Right ventricle myocardium inferior (tissue), 1 donor: ENCODE measurements at regions of chr4 and their contacts with region 1.

Region 1: DNA sequence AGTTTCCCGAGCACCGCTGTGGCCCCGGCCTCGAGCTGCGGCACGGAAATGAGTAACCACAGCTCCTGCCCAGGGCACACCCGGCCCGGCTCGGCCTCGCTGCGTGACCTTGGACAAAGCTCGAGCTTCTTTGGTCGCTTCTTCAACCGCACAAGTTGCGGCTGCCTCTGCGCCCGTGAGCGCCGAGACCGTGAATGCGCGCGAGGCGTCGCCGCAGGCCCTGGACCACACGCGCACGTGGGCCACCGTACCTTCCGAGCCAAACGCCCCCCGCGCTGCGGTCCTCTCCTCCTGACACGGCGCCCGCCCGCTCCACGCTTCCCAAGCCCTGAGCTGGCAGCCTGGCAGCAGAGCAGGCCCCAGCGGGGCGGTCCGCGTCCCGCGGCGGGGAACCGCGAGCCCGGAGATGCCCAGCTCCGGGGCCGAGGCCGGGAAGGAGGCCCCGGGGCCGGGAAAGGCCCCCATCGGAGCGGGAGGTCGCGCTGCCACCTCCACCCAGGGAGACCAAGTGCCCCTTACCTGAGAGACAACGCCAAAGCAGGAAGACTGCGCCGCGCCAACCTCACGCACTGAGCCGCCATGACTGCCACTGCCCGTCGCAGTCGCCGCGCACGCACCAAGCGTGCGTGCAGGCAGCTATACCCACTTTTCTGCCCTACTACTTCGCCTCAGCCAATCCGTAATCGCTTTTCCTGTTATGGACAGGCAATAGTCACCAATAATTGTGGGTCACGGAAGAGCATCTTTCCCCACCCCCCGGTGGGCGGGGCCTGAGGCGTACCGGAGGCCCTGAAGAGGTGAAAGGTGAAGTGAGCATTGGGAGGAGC is at the start of gene GRPEL1:
- DNase-seq: peak; percentile 100
- ATAC-seq: peak; percentile 99
- total RNA-seq, gene GRPEL1: 61.5 TPM

Region 2: DNA sequence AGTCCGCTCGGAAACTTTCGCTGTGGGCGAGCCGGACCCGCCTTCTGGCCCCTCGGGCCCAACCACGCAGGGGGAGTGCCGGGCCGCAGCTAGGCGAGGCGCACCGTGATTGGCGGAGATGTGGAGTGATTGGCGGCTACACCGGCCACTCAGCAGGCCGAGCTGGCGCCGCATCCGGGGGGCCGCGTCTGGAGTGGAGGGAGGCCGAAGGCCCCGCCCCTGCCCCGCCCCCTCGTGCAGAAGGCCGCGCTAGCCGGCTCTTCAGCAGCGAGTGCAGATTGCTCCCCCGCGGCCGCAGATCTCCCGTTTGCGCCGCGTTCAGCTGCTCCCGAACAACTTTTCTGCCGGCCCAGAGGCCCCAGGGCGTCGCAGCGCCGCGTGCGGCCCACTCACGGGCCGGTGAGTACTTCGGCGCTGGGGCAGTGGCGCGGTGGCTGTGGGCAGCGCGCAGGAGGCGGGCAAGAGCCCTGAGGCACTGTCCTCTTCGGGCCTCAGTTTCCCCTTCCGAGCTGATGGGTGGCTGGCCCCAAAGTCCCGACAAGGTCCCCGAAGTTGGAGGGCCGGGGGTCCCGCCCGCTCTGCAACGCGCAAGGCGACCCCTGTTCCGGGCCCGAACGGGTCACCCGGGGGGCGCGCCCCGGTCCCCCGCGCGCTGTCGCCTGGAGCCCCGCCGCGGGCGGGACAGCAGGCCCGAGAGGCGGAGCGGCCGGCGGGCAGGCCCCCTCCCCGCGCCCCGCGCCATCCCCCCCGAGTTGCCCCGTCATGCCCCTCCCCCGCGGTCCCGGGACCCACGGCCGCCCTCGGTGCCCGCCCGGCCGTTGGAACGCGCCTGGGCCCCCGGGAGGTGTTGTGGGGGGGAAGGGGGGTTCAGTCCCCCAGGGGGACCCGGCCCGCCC is 797.8 kb before region 1 on chr4 and contains the start of gene WFS1:
- intact Hi-C with region 1: loop called (anchors 10 kb)
- DNase-seq: peak; percentile 98
- ATAC-seq: peak; percentile 99
- total RNA-seq, gene WFS1: 88.4 TPM

Region 3: DNA sequence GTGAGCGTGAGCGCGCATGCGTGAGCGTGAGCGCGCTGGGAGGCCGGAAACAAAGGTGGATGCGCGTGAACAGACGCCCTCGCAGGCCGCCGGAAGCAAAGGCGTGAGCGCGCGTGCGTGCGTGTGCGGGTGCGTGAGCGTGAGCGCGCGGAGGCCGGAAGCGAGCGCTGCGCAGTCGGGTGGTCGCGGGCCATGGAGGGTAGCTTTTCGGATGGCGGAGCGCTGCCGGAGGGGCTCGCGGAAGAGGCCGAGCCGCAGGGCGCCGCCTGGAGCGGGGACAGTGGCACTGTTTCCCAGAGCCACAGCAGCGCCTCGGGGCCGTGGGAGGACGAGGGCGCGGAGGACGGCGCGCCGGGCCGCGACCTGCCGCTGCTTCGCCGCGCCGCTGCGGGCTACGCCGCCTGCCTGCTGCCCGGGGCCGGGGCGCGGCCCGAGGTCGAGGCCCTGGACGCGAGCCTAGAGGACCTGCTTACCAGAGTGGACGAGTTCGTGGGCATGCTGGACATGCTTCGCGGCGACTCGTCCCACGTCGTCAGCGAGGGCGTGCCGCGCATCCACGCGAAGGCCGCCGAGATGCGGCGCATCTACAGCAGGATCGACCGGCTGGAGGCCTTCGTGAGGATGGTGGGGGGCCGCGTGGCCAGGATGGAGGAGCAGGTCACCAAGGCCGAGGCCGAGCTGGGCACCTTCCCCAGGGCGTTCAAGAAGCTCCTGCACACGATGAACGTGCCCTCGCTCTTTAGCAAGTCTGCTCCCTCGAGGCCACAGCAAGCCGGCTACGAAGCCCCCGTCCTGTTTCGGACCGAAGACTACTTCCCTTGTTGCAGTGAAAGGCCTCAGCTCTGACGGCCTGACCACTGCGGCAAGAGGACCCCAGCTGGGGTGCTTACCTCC is 351.4 kb before region 1 on chr4 and contains the start of gene BLOC1S4:
- intact Hi-C with region 1: loop called (anchors 2 kb)
- DNase-seq: peak; percentile 96
- ATAC-seq: peak; percentile 94
- total RNA-seq, gene BLOC1S4: 6.0 TPM

Region 4: GRCh38 chr4:6848717-6849305 is 218.9 kb before region 1 on chr4:
- intact Hi-C with region 1: no loop called
- DNase-seq: no peak
- ATAC-seq: no peak

Region 5: GRCh38 chr4:6909073-6909965 is 158.3 kb before region 1 on chr4 and contains the start of gene TBC1D14:
- intact Hi-C with region 1: loop called (anchors 2 kb)
- DNase-seq: peak; percentile 94
- ATAC-seq: peak; percentile 94
- total RNA-seq, gene TBC1D14: 36.1 TPM

Region 6: DNA sequence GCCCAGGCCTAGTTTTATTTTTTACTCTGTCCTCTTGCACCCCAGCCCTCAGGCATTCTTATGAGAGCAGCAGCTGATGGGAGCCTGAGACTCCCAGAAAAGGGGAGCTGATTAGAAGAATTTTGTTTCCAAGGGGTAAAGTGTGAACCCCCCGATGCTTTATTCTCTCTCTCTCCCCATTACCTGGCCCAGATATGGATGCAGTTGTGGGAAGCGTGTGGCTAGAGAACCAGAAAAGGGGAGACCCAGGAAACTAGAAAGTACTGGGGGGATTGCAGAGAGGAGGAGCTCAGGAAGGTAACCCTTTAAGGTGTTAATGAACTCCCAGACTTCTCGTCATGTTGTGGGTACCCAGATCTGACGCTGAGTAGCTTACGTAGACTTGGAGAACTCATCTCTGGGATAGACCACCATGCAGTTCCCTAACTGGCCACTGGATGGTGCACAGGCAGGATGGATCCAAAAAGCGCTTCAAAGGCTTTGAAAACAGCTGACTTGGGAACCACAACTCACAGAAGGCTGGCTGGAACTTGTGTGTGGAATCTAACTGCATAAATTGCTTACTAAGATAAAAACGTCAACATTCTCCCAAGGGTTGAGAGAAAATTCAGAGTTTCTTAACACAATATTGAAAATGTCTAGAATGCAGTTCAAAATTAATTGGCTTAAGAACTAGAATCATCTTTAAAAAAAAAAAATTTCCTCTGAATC is 93.4 kb before region 1 on chr4:
- intact Hi-C with region 1: loop called (anchors 1 kb)
- DNase-seq: peak; percentile 71
- ATAC-seq: peak; percentile 82

Region 7: DNA sequence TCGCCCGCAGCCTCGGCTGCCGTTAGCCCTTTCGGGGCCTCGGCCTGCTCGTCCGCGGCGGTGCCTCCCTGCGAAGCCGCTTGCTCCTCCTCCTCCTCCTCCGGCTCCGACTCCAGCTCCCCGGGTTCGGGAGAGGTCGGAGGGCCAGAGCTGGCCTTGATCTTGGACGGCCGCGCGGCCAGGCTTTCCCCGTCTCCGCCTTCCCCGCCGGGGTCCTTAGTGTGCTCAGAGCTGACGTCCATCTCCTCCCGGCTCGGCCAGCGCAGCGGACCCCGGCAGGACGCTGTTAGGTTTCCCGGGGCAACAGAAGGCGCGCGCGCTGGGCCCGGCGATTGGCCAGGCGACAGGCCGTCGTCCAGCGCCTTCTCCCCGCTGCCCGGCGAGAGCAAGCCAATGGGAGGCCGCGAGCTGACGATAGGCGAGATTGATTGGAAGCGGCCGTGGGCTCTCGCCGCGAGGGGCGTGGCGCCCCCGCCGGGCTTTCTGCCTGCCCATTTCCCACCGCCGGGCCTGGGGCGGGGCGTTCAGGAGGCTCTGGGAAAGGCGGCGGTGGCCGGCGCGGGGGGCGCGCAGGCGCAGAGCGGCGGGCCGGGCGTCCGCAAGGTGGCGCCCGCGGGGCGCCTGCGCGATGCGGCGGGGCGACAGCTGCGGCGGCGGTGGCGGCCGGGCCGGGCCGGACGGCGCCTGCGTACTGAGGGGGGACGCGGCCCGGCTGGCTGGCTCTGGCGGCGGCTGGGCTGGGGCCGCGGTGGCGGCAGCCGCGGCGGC is 24.8 kb before region 1 on chr4 and contains the start of gene TADA2B:
- intact Hi-C with region 1: loop called (anchors 1 kb)
- DNase-seq: peak; percentile 99
- ATAC-seq: peak; percentile 97
- total RNA-seq, gene TADA2B: 33.3 TPM